CD14-positive monocyte (primary cell): ENCODE measurements at regions of chr10 and their contacts with region 1.

Region 1: DNA sequence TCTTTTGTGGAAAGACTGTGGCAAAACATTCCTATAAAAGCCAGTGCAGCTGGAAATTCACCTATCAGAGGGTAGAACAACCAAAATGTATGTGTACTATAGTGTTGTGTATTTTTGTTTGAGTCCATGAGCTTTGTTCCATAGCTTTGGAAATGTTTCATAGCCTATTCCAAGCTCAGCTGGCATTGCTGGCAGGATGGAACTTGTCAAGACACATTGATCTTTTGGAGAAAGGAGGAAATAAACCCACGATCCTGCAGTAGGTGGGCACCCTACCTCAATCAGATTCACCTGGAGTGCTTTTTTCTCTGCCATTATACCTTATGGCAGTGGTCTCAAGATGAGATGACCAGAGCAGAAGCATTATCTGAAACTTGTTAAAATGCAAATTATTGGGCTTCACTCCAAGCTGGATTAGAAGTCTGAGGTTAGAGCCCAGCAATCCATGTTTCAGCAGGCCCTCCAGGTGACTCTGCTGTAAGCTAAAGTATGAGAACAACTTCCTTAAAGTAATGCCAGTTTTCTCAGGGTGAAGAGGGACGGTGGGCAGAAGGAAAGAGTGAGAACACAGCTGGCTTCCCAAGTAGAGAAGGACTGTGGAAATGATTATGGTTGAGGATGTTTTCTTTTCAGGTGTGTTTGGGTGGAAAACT is 30.3 kb upstream of the CDK1 start:
- DNase-seq: no peak
- H3K4me3 ChIP-seq: no peak overlapping the region
- H3K4me3 Mint-ChIP-seq: no peak overlapping the region
- H3K27ac ChIP-seq: no peak overlapping the region
- H3K27ac Mint-ChIP-seq: no peak overlapping the region
- H3K4me1 ChIP-seq: no peaks in the 10 kb centered on the region
- H3K4me1 Mint-ChIP-seq: no peaks in the 10 kb centered on the region
- H3K27me3 ChIP-seq: no peaks in the 10 kb centered on the region
- H3K27me3 Mint-ChIP-seq: peaks cover 0 to 2% (median 1%) of the 10 kb centered on the region in 3 donors
- CTCF ChIP-seq: no peak

Region 2: GRCh38 chr10:60343254-60343653 is 404.7 kb before region 1 on chr10:
- intact Hi-C with region 1: no loop called
- DNase-seq: no peak
- H3K4me3 ChIP-seq: no peak overlapping the region
- H3K4me3 Mint-ChIP-seq: no peak overlapping the region
- H3K27ac ChIP-seq: no peak overlapping the region
- H3K27ac Mint-ChIP-seq: no peak overlapping the region
- H3K4me1 ChIP-seq: no peaks in the 10 kb centered on the region
- H3K4me1 Mint-ChIP-seq: no peaks in the 10 kb centered on the region
- H3K27me3 ChIP-seq: no peaks in the 10 kb centered on the region
- H3K27me3 Mint-ChIP-seq: no peaks in the 10 kb centered on the region
- CTCF ChIP-seq: no peak

Region 3: DNA sequence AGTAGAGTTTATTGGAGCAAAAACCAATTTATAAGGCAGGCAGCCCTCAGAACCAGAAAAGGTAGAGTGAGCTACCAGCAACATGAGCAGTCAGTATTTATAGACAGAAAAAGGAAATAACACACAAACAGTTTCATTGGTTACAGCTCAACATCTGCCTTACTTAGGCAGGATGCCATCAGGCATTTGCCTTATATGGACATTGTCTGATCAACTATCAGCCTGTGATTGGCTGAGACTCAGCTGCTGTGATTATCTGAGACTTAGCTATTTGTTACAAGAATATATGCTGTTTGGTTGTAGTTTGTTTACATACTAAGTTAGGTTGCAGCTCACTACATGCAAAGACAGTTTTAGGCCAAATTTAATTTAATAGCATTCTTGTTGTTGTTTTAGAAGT is 30.1 kb before region 1 on chr10:
- intact Hi-C with region 1: no loop called
- DNase-seq: no peak
- H3K4me3 ChIP-seq: no peak overlapping the region
- H3K4me3 Mint-ChIP-seq: no peak overlapping the region
- H3K27ac ChIP-seq: no peak overlapping the region
- H3K27ac Mint-ChIP-seq: no peak overlapping the region
- H3K4me1 ChIP-seq: no peaks in the 10 kb centered on the region
- H3K4me1 Mint-ChIP-seq: peaks cover 3% of the 10 kb centered on the region
- H3K27me3 ChIP-seq: no peaks in the 10 kb centered on the region
- H3K27me3 Mint-ChIP-seq: peaks cover 0 to 2% (median 1%) of the 10 kb centered on the region in 3 donors
- CTCF ChIP-seq: no peak

Region 4: GRCh38 chr10:60795465-60796202 is 47.7 kb after region 1 on chr10:
- intact Hi-C with region 1: loop called in 1 of 2 experiments (anchors 2 kb)
- DNase-seq: no peak
- H3K4me3 ChIP-seq: no peak overlapping the region
- H3K4me3 Mint-ChIP-seq: no peak overlapping the region
- H3K27ac ChIP-seq: peak overlapping the region in 1 of 2 donors; percentile 7
- H3K27ac Mint-ChIP-seq: no peak overlapping the region
- H3K4me1 ChIP-seq: no peaks in the 10 kb centered on the region
- H3K4me1 Mint-ChIP-seq: peaks cover 3% of the 10 kb centered on the region
- H3K27me3 ChIP-seq: no peaks in the 10 kb centered on the region
- H3K27me3 Mint-ChIP-seq: no peaks in the 10 kb centered on the region
- CTCF ChIP-seq: no peak